Mammary epithelial cell (primary cell): ENCODE measurements at regions of chr19 and their contacts with region 1.

Region 1: GRCh38 chr19:49363268-49364082 is at the start of gene DKKL1:
- DNase-seq: peak; percentile 99
- H3K4me3 ChIP-seq: peak within 1 kb of the TSS; percentile 70 to 98 (median 77)
- H3K27ac ChIP-seq: peak within 1 kb of the TSS; percentile 51
- H3K4me1 ChIP-seq: peaks cover 4% of the 10 kb centered on the region
- H3K27me3 ChIP-seq: no peaks in the 10 kb centered on the region
- CTCF ChIP-seq: peak in 1 of 2 donors; percentile 38
- total RNA-seq, gene DKKL1: not detected

Region 2: DNA sequence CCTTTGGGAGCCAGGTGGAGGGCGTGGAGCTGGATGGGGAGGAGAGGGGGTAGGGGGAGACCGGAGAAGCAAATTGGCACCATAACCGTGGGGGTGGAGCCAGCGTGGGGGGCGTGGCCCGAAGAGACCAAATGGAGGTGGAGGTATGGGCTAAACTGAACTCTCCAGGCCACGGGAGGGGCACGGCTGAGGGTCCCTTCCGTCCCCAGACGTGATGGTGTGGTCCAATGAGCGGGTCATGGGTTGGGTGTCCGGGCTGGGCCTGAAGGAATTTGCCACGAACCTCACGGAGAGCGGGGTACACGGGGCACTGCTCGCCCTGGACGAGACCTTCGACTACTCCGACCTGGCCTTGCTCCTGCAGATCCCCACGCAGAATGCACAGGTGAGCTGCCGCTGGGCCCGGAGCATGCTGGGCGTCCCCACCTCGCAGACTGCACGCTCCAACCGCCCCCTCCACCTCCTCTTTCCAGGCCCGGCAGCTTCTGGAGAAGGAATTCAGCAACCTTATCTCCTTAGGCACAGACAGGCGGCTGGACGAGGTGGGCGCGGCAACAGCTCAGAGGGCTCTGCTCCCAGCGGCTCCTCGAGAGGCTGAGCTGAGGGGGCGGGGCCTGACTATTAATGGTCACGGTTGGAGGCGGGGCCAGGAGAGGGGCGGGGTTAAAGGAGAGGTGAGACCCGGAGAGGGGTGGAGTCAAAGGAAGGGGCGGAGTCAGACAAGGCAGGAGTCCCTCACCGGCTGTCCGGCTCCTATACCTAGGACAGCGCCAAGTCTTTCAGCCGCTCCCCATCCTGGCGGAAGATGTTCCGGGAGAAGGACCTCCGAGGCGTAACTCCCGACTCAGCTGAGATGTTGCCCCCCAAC is 214.5 kb before region 1 on chr19:
- CTCF ChIA-PET with region 1: no interaction called
- dilution Hi-C with region 1: no loop called
- in situ Hi-C with region 1: no loop called
- intact Hi-C with region 1: no loop called
- DNase-seq: peak; percentile 91
- H3K4me3 ChIP-seq: peak overlapping the region; percentile 33 to 82 (median 60)
- H3K27ac ChIP-seq: no peak overlapping the region
- H3K4me1 ChIP-seq: peaks cover 19% of the 10 kb centered on the region
- H3K27me3 ChIP-seq: no peaks in the 10 kb centered on the region
- CTCF ChIP-seq: no peak

Region 3: GRCh38 chr19:49243129-49243528 is 120.3 kb before region 1 on chr19:
- CTCF ChIA-PET with region 1: no interaction called
- dilution Hi-C with region 1: no loop called
- in situ Hi-C with region 1: no loop called
- intact Hi-C with region 1: no loop called
- DNase-seq: no peak
- H3K4me3 ChIP-seq: no peak overlapping the region
- H3K27ac ChIP-seq: no peak overlapping the region
- H3K4me1 ChIP-seq: no peaks in the 10 kb centered on the region
- H3K27me3 ChIP-seq: no peaks in the 10 kb centered on the region
- CTCF ChIP-seq: no peak

Region 4: DNA sequence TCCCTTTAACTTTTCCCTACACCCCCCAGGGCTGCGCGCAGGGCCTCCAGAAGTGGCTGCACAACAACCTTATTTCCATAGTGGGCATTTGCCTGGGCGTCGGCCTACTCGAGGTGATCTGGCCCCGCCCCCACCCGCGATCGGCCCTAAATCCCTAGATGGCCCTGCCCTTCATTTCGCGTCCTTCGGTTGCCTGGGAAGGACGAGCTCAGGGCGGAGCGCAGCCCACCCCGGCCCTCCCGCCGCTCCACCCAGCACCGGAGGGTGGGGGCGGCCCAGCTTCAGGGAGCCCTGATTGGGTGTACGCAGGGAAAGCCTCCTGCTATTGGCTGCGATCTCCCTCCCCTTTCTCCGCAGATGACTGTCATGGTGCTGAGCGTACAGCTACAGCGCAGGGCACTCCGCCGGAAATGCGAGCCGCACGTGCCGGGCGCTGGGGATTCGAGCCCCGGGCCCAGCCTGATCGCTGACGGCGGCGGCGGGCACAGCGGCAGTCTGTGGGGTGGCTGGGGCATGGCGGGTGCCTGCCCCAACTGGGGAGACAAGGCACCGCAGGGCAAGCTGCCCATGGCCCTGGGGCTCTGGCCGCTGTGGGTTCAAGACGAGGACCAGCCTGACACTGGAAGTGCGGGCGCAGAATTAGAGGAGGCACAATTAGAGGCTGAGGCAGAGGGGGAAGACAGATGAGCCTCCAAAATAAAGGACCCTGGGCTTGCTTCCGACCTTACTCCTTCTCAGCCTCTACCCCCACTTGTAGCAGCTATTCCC is 24.0 kb before region 1 on chr19:
- CTCF ChIA-PET with region 1: no interaction called
- dilution Hi-C with region 1: no loop called
- in situ Hi-C with region 1: no loop called
- intact Hi-C with region 1: loop called (anchors 2 kb)
- DNase-seq: peak; percentile 66
- H3K4me3 ChIP-seq: peak overlapping the region in 2 of 3 experiments; percentile 23 to 39
- H3K27ac ChIP-seq: no peak overlapping the region
- H3K4me1 ChIP-seq: peaks cover 13% of the 10 kb centered on the region
- H3K27me3 ChIP-seq: no peaks in the 10 kb centered on the region
- CTCF ChIP-seq: no peak